ENCODE measurements at regions of chr5 and their contacts with region 1.

Region 1: DNA sequence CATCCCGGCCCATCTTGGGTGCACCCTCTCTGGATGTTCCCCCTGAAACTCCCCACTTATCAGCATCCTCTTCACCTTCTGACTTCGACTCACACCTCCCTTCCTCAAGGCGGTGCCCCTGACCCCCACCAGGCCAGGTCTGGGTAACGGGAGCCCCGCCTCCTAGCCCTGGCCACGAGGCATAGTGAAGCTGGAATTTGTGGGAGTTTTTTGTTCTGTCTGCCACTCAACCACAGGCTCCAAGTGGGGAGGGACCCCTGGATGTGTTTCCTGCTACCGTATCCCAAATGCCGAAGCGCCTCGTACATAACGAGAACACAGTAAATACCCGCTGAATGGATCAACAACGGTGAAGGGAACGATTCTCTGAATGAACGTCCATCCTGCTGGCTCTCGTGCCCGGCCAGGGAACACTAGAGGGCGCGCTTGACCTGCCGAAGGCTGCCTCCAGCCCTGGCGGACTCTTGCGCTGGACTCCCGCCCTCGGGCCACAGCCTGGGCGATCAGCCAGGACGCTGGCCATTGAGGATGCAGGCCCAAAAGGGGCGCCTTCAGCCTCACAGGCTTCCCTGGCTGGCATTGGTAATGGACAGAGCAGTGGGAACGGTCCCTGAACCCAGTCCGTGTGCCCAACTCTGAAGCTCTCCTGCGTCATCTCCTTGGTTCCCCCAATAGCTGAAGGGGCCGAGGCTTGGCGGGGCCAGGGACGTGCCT is 47.3 kb upstream of the PHYKPL start:
- DNase-seq: peak; percentile 92

Region 2: DNA sequence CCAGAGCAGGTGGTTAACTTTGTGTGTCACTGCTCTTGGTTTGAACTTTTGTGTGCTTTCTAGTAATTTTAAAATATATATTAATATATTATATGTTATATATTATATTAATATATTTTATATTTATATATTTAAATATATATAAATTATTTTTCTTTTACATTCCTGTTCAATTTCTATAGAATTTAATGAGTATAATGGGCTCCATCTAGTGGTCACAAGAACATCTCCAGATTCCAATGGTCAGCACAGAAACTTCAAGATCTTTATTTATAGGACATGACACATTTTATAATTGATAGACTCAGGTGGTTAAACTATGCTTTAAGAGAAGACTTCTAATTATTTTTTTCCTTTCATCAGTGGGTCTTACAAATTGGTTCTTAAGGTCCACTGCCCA is 271.2 kb after region 1 on chr5:
- CTCF ChIA-PET with region 1: interaction called, 10 read pairs
- POLR2A ChIA-PET with region 1: no interaction called
- DNase-seq: no peak